Activated CD4-positive, alpha-beta memory T cell treated with anti-CD3 and anti-CD28 coated beads for 36 hours (primary cell): ENCODE measurements at regions of chr22 and their contacts with region 1.

Region 1: DNA sequence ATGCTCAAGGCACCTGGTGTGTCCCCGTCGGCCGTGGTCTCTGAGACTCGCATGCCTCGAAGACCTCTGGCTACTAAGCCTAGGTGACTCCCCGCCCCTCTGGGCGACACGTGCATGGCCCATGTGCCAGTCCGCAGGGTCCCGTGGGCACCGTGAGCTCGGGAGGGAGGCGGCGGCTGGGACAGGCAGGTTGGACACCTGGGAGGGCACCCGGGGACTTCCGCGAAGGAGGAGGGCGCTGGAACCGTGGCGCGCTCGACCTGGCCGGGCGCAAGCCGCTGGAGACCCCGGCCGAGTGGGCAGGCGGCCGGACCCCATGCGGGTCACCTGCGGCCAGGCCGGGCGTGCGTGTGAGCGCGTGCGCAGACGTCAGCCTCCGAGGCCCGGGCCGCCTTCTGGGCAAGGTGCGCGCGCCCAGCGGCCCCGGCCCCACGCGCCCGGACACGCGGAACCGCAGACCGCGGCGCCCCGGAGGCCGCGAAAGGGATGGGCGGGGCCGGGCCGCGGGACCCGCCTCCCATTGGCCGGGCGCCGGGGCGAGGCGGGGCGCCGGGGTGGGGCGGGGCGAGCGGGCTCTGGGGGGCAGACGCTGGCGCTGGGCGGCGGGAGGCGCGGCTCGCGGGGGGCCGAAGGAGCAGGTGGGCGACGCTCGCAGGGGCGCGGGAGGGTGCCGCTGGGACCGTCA is 579 bp upstream of the RASD2 start:
- DNase-seq: peak; percentile 65
- H3K4me3 Mint-ChIP-seq: peak overlapping the region; percentile 61
- H3K27ac Mint-ChIP-seq: no peak overlapping the region
- H3K4me1 Mint-ChIP-seq: peaks cover 4% of the 10 kb centered on the region
- H3K27me3 Mint-ChIP-seq: peaks cover 28% of the 10 kb centered on the region

Region 2: GRCh38 chr22:35491908-35492380 is 48.1 kb before region 1 on chr22:
- CTCF ChIA-PET with region 1: no interaction called
- POLR2A ChIA-PET with region 1: no interaction called
- intact Hi-C with region 1: loop called (anchors 5 kb)
- DNase-seq: no peak
- H3K4me3 Mint-ChIP-seq: no peak overlapping the region
- H3K27ac Mint-ChIP-seq: no peak overlapping the region
- H3K4me1 Mint-ChIP-seq: no peaks in the 10 kb centered on the region
- H3K27me3 Mint-ChIP-seq: peaks cover 38% of the 10 kb centered on the region

Region 3: GRCh38 chr22:35552196-35552842 is 12.3 kb after region 1 on chr22:
- CTCF ChIA-PET with region 1: interaction called, 4 read pairs
- POLR2A ChIA-PET with region 1: no interaction called
- intact Hi-C with region 1: loop called (anchors 1 kb)
- DNase-seq: peak; percentile 89
- H3K4me3 Mint-ChIP-seq: no peak overlapping the region
- H3K27ac Mint-ChIP-seq: no peak overlapping the region
- H3K4me1 Mint-ChIP-seq: peaks cover 14% of the 10 kb centered on the region
- H3K27me3 Mint-ChIP-seq: no peaks in the 10 kb centered on the region

Region 4: GRCh38 chr22:35582861-35583670 is 43.0 kb after region 1 on chr22:
- CTCF ChIA-PET with region 1: interaction called, 8 read pairs
- POLR2A ChIA-PET with region 1: no interaction called
- intact Hi-C with region 1: loop called (anchors 10 kb)
- DNase-seq: peak; percentile 64
- H3K4me3 Mint-ChIP-seq: no peak overlapping the region
- H3K27ac Mint-ChIP-seq: no peak overlapping the region
- H3K4me1 Mint-ChIP-seq: no peaks in the 10 kb centered on the region
- H3K27me3 Mint-ChIP-seq: no peaks in the 10 kb centered on the region